AG04449 (cell line): ENCODE measurements at regions of chr4 and their contacts with region 1.

Region 1: GRCh38 chr4:38034986-38035882 is 75.0 kb downstream of the PTTG2 start:
- DNase-seq: no peak
- H3K4me3 ChIP-seq: no peak overlapping the region
- CTCF ChIP-seq: peak; percentile 44

Region 2: DNA sequence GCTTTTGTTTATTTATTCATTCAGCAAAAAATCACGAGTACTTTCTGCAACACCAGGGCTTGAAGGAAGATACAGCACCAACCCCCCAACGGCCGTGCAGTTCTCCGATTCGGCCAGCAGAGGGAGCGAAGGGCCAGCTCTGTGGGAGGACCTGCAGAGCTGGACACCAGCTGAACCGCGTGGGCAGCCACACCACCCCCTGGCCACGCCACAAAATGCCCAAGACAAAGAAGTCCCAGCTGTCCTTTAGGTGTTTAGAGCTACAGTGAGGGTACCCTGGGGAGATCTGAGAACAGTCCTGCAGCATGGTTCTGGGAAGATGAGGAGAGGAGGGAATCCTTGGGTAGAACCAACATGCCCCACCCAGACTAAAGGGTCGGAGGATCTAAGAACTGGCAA is 432.2 kb before region 1 on chr4:
- CTCF ChIA-PET with region 1: interaction called, 25 read pairs
- POLR2A ChIA-PET with region 1: no interaction called
- DNase-seq: no peak
- H3K4me3 ChIP-seq: no peak overlapping the region
- CTCF ChIP-seq: peak; percentile 97

Region 3: DNA sequence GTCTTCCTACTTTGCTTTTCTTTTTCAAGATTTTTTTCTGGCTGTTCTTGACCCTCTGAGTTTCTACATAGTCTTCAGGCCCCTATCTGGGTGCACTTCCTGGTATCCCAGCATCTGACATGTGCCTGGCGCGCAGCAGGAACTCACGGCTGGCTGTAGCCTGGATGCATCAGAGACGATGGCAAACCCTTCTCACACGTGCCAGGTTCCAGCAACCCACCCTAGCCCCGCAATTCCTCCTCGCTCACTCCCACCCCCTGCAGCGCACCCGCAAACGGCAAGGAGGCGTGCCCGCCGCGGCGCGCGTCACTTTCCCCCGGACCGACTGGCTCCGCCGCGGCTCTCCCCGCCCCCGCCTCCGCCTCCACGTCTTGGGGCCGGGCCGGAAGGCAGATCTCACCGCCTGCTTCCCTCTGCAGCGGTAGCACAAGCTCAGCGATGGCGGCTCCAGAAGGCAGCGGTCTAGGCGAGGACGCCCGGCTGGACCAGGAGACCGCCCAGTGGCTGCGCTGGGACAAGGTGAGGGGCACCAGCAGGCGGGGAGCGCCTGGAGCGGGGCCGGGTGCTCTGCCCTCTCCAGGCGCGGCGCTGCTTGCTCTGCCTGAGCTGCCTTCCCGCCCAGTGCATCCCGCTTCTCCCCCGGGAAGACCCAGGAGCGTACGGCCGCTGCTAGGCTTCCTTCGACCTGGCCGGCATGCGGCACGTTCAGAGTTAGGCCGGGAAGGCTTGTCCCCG is 208.8 kb before region 1 on chr4 and contains the start of gene PGM2:
- CTCF ChIA-PET with region 1: interaction called, 14 read pairs
- POLR2A ChIA-PET with region 1: no interaction called
- DNase-seq: no peak
- H3K4me3 ChIP-seq: peak within 1 kb of the TSS; percentile 84
- CTCF ChIP-seq: peak; percentile 16

Region 4: GRCh38 chr4:37938208-37938607 is 97.0 kb before region 1 on chr4:
- CTCF ChIA-PET with region 1: no interaction called
- POLR2A ChIA-PET with region 1: no interaction called
- DNase-seq: no peak
- H3K4me3 ChIP-seq: no peak overlapping the region
- CTCF ChIP-seq: no peak

Region 5: DNA sequence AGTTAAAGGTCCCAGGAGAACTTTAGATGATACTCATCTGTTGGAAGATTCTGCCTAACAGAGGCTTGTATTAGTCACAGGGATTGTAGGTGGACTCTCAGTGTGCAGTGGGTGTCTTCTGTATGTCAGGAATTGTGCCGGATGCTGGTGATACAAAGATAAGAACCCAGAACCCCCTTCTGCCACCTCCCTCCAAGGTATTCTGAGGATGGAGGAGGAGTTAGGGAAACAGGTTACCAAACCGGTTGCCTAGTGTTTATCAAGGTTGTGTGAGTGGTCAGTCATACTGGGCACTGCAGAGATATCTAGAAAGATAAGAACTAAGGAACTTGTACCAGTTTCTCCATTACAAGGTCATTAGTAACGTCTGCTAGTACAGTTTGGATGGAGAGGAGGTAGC is 13.5 kb before region 1 on chr4:
- CTCF ChIA-PET with region 1: interaction called, 10 read pairs
- POLR2A ChIA-PET with region 1: no interaction called
- DNase-seq: no peak
- H3K4me3 ChIP-seq: no peak overlapping the region
- CTCF ChIP-seq: no peak

Region 6: DNA sequence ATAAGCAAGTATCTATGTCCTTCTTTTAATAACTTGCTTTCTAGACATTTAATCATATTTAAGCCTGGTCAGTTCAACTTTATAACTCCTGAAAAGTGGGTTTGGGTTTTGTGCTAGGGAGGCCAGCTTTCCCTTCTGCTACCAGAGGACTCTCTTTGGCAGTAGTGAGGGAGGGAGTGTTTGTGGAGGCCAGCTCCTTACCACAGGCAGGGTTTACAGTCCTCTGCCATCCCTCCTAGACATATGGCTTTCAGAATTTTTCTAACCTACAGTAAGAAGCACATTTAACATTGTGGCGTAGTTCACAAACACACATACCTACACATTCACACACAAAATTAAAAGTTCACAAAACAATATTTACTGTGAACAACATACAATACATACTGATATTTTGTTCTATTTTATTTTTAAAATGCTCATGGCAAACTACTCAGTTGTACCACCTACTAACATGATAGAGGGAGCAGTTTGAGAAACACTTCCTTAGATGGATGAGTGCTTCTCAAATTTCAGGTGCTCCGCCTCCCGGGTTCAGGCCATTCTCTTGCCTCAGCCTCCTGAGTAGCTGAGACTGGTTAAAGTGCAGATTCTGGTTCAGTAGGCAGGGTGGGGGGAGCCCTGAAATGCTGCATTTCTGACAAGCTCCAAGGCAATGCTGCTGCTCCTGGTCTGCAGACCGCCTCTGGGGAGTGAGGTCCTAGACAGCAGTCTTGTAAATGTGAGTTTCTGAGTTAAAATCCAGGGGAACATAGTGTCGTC is 11.7 kb after region 1 on chr4:
- CTCF ChIA-PET with region 1: interaction called, 23 read pairs
- POLR2A ChIA-PET with region 1: no interaction called
- DNase-seq: no peak
- H3K4me3 ChIP-seq: no peak overlapping the region
- CTCF ChIP-seq: no peak

Region 7: DNA sequence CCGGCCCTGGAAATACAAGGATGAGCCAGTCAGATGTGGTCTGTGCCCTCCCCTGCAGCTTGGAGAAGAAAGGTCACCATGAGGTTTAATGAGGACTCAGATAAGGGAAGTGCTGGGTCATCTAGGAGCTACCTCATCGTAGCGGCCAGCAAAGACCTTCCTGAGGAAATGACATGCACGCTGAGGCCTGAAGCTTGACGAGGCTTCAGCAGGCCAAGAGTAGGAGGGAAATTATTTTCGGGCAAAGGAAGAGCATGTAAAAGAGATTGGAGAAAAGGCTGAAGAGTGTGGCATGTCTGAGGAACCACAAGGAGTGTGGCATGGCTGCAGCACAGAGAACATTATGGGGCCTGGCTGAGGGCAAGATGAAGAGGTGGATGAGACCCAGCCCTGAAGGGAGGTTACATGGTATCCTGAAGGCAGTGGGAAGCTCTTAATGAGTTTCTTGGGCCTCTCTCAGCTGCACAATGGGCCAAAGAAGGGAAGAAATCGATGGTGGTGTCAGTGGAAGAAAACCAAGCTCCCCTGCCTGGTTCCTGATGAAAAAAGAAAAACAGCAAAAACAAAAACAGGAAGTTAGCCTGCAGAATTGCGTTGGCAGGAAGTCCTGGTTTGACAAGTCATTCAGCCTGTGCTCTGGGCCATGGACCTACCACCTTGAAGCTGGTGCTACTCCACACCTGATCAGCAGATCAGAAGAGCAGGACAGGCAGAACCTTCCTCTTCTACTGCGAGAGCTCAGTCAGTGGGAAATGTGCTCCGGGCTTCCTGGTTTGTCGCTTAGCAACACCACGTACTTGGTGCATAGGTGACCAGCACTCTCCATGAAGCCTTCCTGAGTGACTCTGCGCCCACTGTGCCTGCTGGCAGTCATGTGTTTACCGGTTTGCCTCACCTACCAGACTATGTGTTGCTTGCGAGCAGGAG is 494.2 kb after region 1 on chr4:
- CTCF ChIA-PET with region 1: no interaction called
- POLR2A ChIA-PET with region 1: no interaction called
- DNase-seq: no peak
- H3K4me3 ChIP-seq: no peak overlapping the region
- CTCF ChIP-seq: no peak